ENCODE measurements at regions of chr12 and their contacts with region 1.

Region 1: DNA sequence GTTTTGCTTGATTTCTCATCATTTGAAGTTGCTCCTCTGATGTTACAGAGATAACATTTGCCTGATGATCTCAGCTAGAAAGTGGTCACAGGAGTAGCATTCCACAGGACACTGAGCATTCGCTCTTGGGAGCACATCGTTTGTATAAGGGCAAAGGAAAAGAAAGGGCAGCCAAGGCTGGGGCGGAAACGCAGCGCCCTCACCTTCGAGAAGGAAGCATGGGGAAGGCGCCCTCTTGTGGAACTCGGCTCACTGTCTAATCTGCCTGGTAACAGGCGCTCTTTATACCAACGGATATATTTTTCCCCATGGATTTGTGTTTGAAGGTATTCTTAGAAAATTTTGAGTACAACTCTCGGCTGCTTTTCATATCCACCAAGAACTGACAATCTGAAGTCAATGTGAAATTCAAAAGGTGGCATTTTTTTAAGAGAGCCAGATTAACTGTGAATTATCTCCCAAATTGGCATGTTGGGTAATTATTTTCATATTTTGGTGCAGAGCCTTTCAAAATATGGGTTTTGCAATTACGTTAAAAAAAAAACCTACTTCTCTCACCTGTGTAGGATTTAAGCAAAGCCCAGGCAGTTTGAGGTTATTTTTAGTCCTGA is 172.7 kb downstream of the CAND1 start:
- DNase-seq: peak; percentile 82
- H3K4me3 Mint-ChIP-seq: no peak overlapping the region
- H3K27ac Mint-ChIP-seq: no peak overlapping the region
- H3K4me1 Mint-ChIP-seq: no peaks in the 10 kb centered on the region
- H3K27me3 Mint-ChIP-seq: no peaks in the 10 kb centered on the region
- CTCF ChIP-seq: peak; percentile 78

Region 2: DNA sequence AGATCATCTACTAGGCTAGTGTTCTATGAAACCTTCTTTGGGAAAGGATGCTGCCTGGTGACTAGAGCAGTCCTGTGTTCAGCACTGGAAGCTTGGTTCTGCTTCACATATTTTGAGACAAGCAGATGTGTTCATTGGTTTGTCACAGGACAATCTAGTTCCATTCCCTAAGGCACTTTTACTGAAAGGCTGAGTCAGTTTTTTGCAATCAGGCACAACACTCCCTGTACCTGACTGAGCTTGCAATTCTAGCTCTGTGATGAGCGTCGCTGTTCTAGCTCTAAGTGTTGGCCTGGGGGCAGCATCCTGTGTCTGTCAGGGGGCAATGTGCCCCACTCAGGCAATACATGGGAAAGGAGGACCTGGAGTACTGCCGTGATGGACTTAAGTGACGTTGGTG is 28.3 kb before region 1 on chr12:
- CTCF ChIA-PET with region 1: interaction called, 10 read pairs
- POLR2A ChIA-PET with region 1: no interaction called
- intact Hi-C with region 1: no loop called
- DNase-seq: peak; percentile 65
- H3K4me3 Mint-ChIP-seq: no peak overlapping the region
- H3K27ac Mint-ChIP-seq: no peak overlapping the region
- H3K4me1 Mint-ChIP-seq: peaks cover 13% of the 10 kb centered on the region
- H3K27me3 Mint-ChIP-seq: no peaks in the 10 kb centered on the region
- CTCF ChIP-seq: no peak

Region 3: GRCh38 chr12:67452119-67452805 is 10.4 kb after region 1 on chr12:
- CTCF ChIA-PET with region 1: interaction called, 27 read pairs
- POLR2A ChIA-PET with region 1: interaction called, 4 read pairs
- intact Hi-C with region 1: no loop called
- DNase-seq: no peak
- H3K4me3 Mint-ChIP-seq: no peak overlapping the region
- H3K27ac Mint-ChIP-seq: no peak overlapping the region
- H3K4me1 Mint-ChIP-seq: peaks cover 17% of the 10 kb centered on the region
- H3K27me3 Mint-ChIP-seq: no peaks in the 10 kb centered on the region
- CTCF ChIP-seq: no peak

Region 4: GRCh38 chr12:67943226-67943892 is 501.5 kb after region 1 on chr12:
- CTCF ChIA-PET with region 1: interaction called, 11 read pairs
- POLR2A ChIA-PET with region 1: no interaction called
- intact Hi-C with region 1: loop called (anchors 2 kb)
- DNase-seq: peak; percentile 78
- H3K4me3 Mint-ChIP-seq: no peak overlapping the region
- H3K27ac Mint-ChIP-seq: no peak overlapping the region
- H3K4me1 Mint-ChIP-seq: peaks cover 9% of the 10 kb centered on the region
- H3K27me3 Mint-ChIP-seq: no peaks in the 10 kb centered on the region
- CTCF ChIP-seq: peak; percentile 73

Measured in MCF 10A (cell line).